Left ventricle myocardium inferior (tissue), 1 donor: ENCODE measurements at regions of chr6 and their contacts with region 1.

Region 1: GRCh38 chr6:163965426-163966348 is 551.2 kb downstream of the QKI start:
- DNase-seq: peak; percentile 41
- H3K4me3 ChIP-seq: no peak overlapping the region
- H3K27ac ChIP-seq: peak overlapping the region; percentile 95
- H3K4me1 ChIP-seq: peaks cover 43% of the 10 kb centered on the region
- H3K27me3 ChIP-seq: no peaks in the 10 kb centered on the region
- CTCF ChIP-seq: no peak

Region 2: GRCh38 chr6:162856885-162857284 is 1108.8 kb before region 1 on chr6:
- intact Hi-C with region 1: loop called (anchors 10 kb)
- DNase-seq: no peak
- H3K4me3 ChIP-seq: peak overlapping the region; percentile 54
- H3K27ac ChIP-seq: peak overlapping the region; percentile 71
- H3K4me1 ChIP-seq: peaks cover 6% of the 10 kb centered on the region
- H3K27me3 ChIP-seq: no peaks in the 10 kb centered on the region
- CTCF ChIP-seq: peak; percentile 69

Region 3: DNA sequence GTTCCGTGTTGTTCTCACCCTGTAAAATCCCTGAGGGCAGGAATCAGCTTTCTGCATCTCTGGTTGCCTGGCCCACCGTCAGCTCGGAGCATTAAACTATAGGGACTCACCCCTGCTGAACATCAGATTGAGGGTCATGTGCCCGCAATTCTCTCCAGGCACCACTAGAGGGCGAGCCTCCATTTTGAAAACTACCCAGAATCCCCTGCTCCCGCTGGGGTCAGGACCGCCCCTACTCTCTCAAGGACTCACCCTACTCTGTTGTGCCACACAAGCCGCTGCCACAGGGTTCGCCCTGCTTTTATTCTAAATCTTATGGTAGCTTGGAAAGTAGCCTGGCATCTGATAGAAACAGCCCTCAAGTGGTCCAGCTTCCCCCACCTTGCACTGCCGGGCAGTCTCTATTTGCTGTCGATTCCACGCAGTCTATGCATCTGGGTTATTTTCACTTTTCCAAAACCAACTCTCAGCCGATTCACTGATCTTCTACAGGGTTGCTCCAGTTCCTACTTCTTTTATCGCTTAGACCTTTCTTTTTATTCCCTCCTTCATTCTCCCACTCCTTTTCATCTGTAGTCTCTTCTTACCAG is 795.3 kb before region 1 on chr6:
- intact Hi-C with region 1: loop called (anchors 10 kb)
- DNase-seq: no peak
- H3K4me3 ChIP-seq: no peak overlapping the region
- H3K27ac ChIP-seq: no peak overlapping the region
- H3K4me1 ChIP-seq: no peaks in the 10 kb centered on the region
- H3K27me3 ChIP-seq: no peaks in the 10 kb centered on the region
- CTCF ChIP-seq: peak; percentile 64

Region 4: GRCh38 chr6:164106345-164106769 is 140.7 kb after region 1 on chr6:
- intact Hi-C with region 1: loop called (anchors 5 kb)
- DNase-seq: peak; percentile 73
- H3K4me3 ChIP-seq: peak overlapping the region; percentile 52
- H3K27ac ChIP-seq: peak overlapping the region; percentile 96
- H3K4me1 ChIP-seq: peaks cover 60% of the 10 kb centered on the region
- H3K27me3 ChIP-seq: no peaks in the 10 kb centered on the region
- CTCF ChIP-seq: peak; percentile 74

Region 5: DNA sequence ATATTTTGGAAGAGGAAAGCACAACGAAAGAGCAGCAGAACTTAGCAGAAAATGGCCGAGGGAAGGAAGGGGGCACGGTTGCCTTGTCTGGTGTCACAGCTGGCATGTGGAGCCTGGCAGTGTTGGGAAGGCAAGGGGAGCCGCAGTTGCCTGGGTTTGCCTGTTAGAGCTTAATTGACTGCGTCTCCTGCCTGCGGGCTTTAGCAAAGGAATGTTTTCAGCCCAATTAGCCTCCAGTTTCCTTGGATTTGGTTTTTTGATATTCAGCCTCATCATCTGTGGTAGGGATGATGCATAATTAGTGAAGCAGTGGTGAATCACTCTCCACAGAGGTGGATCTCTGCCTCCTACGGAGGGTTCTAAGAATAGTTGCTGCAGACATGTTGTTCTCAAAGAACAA is 281.4 kb after region 1 on chr6:
- intact Hi-C with region 1: no loop called
- DNase-seq: no peak
- H3K4me3 ChIP-seq: no peak overlapping the region
- H3K27ac ChIP-seq: no peak overlapping the region
- H3K4me1 ChIP-seq: no peaks in the 10 kb centered on the region
- H3K27me3 ChIP-seq: no peaks in the 10 kb centered on the region
- CTCF ChIP-seq: no peak